Spleen (tissue), 13 donors: ENCODE measurements at regions of chr17 and their contacts with region 1.

Region 1: DNA sequence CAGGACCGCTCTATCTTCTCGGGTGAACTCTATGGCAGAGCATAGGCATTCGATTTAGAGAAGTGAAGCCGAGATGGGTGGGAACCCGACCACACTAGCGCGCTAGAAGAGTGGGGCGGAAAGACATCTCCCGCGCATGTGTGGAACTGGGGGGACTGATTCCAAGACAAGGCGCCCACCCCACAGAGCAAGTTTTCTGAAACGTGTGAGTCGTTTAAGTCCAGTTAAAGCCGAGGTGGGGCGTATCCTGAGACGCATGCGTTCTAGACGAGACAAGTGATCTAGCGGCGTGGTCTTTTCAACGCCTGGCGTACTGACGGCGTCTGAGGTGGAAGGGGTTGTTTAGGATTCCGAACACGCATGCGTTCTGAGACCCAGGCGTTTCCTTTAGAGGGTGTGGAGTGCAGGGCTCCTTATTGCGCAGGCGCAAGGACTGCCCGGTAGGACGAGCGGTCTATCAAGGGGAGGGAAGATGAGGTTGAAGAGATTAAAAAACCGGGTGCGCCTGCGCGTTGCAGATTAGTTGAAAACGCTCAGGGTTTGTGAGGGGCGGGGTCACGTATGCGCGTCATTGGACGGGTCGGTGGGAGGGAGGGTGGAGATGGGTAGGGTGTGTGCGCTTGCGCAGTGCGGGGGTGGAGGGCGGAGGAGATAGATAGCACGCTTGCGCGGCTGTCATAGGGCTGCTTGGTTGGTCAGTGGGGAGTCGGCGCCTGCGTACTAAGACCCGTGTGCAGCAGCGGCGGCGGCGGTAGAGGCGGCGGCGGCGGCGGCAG is at the start of gene EIF5A:
- DNase-seq: peak; percentile 100
- H3K4me3 ChIP-seq: peak within 1 kb of the TSS; percentile 89 to 97 (median 92)
- H3K27ac ChIP-seq: peak within 1 kb of the TSS; percentile 83 to 100 (median 98)
- H3K4me1 ChIP-seq: peaks cover 26 to 50% (median 39%) of the 10 kb centered on the region in 6 donors
- H3K27me3 ChIP-seq: no peaks in the 10 kb centered on the region
- CTCF ChIP-seq: no peak
- POLR2A ChIP-seq: peak; percentile 76 to 94 (median 91)
- total RNA-seq, gene EIF5A: 117 to 326 (median 244) TPM

Region 2: DNA sequence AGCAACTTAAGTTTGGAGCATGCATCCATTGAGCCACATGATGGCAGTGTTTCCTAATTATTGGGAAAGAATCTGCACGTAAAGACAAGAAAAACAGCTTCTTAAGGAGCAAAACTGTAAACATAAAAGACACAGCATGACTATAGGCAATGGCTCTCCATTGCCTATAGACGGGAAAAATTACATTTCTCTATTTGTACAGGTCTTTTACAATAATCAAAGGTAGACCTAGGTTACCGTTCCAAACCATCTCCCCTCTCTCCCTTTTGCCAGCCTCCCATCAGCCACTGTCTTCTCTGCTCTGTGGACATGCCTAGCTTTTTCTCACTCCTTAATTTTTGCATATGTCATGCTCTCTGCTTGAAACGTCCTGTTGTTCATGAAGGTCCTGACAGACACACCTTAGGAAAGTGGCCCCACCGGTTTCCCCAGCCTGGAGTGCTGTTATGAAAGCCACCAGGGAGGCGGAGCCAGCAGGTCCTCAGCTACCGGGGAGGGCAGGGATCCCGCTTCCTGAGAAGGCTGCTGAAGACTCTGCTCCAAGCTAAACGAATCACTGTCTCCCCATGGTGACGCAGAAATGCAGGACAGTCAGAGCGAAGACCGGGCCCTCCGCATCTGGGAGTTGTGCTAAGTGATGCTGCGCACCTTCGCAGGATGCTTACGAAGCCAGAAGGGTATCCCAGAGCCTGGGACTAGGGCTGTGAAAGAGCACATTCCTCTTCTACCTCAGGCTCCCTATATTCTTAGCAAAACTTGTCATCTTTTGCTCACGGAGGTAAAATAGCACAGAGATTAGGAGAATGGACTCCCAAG is 261.0 kb before region 1 on chr17:
- intact Hi-C with region 1: loop called (anchors 10 kb)
- DNase-seq: peak; percentile 83
- H3K4me3 ChIP-seq: peak overlapping the region in 6 of 8 donors; percentile 7 to 66 (median 33)
- H3K27ac ChIP-seq: peak overlapping the region; percentile 2 to 89 (median 76)
- H3K4me1 ChIP-seq: peaks cover 20 to 61% (median 42%) of the 10 kb centered on the region in 6 donors
- H3K27me3 ChIP-seq: peaks cover 0 to 54% (median 24%) of the 10 kb centered on the region in 7 donors
- CTCF ChIP-seq: peak in 10 of 11 experiments; percentile 65 to 86 (median 78)
- POLR2A ChIP-seq: no peak